Dorsolateral prefrontal cortex (tissue), 120 donors: ENCODE measurements at regions of chr7 and their contacts with region 1.

Region 1: DNA sequence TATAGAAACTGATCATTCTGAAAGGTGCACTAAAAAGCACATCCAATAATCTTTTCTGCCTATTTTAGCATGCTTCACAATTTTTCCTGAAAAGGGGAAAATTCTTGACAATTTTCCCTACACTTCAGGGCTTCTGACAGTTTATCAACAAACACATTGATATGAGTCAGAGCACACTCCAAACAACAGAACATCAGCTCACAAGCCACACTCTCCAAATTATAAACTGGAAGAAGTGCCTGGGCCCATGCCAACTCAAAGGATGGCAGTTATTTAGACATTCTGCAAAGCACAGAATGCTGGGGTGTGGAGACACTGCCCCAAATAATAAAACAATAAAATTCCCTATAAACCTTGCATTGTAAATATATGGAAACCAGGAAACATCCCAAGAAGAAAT is 90.8 kb downstream of the ELAPOR2 start:
- DNase-seq: peak in 1 of 10 donors; percentile 44
- H3K4me3 ChIP-seq: no peak overlapping the region
- H3K27ac ChIP-seq: peak overlapping the region in 1 of 59 donors; percentile 8
- H3K27me3 ChIP-seq: no peaks in the 10 kb centered on the region
- CTCF ChIP-seq: no peak

Region 2: DNA sequence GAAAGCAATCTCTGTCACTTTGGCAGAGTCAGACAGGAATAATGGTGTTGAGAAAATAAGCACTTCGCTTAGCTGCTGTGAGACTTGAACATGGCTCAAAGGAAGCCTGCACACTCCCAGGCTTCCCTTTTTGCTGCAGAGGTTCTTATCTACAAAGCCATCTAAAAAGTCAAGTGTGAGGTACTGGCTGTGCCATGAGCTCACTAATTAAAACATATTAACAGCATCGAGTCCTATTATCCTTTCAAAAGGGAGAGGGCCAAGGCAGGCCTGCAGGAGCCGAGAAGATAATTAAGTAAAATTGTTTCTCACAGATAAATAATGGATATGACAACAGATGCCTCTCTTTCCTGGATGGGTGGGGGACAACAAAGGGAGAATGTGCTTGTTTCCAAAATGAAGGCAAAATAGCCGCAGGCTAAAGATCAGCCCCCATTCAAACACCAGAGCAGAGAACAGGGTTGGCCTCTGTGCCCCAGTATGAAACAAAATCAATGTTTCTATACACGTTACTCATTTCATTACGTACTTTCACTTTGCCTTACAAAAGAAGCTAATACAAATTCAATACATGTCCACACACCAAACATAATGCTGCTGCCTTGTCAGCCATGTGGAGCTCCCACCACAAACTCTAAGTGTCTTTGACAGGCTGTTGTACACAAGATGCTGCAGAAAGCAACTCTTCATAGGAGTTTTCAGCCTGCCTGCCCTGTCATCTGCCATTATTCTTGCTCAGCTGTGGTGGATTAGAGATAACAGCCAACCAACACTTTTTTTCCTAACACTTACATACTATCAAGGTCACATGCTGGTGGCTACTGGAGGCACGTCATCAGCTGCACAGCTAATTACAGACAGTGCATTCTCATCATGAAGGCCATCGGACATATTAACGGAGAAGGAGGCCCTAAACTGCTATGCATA is 35.5 kb after region 1 on chr7:
- intact Hi-C with region 1: loop called in 1 of 2 experiments (anchors 5 kb)
- DNase-seq: peak in 2 of 10 donors; percentile 35 to 48
- H3K4me3 ChIP-seq: peak overlapping the region in 54 of 59 donors; percentile 1 to 63 (median 32)
- H3K27ac ChIP-seq: peak overlapping the region; percentile 10 to 91 (median 79)
- H3K27me3 ChIP-seq: no peaks in the 10 kb centered on the region
- CTCF ChIP-seq: peak in 1 of 56 donors; percentile 9